Activated CD8-positive, alpha-beta T cell treated with anti-CD3 and anti-CD28 coated beads for 36 hours (primary cell): ENCODE measurements at regions of chr10 and their contacts with region 1.

Region 1: GRCh38 chr10:784403-785088 is 95.1 kb upstream of the DIP2C start:
- DNase-seq: peak; percentile 83
- ATAC-seq: peak; percentile 89
- H3K4me3 Mint-ChIP-seq: no peak overlapping the region
- H3K27ac Mint-ChIP-seq: no peak overlapping the region
- H3K4me1 Mint-ChIP-seq: peaks cover 2% of the 10 kb centered on the region
- H3K27me3 Mint-ChIP-seq: peaks cover 21% of the 10 kb centered on the region
- CTCF ChIP-seq: no peak

Region 2: DNA sequence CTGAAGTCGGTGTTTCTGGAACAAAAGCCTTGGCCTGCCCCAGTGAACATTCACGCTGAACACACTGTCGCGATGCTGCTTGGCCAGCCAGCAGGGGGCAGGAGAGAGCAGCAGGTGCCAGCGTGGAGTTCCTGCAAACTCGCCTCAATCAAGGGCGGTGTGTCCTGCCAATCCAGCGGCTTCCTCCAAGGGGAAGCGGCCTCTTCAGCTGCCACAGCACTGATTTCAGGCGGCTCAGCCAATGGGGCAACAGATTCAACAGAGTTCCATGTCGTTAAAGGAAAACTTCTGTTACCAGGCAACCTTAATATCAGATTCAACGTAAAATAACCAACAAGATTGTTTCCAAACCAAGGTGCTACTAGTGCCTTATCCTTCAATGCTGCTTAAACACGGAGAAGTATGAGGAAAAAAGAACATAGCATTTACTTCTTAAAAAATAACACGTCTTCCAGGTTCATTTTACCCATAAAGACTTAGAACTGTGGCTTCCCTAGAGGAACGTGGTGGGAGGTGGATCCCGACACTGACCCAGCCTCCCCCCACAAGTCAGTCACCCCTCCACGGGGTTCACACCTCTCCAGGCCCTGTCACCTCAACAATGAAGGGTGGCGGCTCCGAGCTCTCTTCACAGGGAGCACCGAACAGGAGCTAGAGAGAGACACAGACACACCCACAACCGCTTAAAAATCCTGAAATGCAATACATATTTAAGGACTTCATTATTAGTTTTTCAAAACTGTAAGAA is 273.3 kb before region 1 on chr10:
- CTCF ChIA-PET with region 1: no interaction called
- POLR2A ChIA-PET with region 1: no interaction called
- intact Hi-C with region 1: loop called (anchors 10 kb)
- DNase-seq: peak; percentile 80
- ATAC-seq: peak; percentile 95
- H3K4me3 Mint-ChIP-seq: no peak overlapping the region
- H3K27ac Mint-ChIP-seq: no peak overlapping the region
- H3K4me1 Mint-ChIP-seq: peaks cover 6% of the 10 kb centered on the region
- H3K27me3 Mint-ChIP-seq: peaks cover 3% of the 10 kb centered on the region
- CTCF ChIP-seq: peak; percentile 88